ENCODE measurements at regions of chr14 and their contacts with region 1.

Region 1: DNA sequence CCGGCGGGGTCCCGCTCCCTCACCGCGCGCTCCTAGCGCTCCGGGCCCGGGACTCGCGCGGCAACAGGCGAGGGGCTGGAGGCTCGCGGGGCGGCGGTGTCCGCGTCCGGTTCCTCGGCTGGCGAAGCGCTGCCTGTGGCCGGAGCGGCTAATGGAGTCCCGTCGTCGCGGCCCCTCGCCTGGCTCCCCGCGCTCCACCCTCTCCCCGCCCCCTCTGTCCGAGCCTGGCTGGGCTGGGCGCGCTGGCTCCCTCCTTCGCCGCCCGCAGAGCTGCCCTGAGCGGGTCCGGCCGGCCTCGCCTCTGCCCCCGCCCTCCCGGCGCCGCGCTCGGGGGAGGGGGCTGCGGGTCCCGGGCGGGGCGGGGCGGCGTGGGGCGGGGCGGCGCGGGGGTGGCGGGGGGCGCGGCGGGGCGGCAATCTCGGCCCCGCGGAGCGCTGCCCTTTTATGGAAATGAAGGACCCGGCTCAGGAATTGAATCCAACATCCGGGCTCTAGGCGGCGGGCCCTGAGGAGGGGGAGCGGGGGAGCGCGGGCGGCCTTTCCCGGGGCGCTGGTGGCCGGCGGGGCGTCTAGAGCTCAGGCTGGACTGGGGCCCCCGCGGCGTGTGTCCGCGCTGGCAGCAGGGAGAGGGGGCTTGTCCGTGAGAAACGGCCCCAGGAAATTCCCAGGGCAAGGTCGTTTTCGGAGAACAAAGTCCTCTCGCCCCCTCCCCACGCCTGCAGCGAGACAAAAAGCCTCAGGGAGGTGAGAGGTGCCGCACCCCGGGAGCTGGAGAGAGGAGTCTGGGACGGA is at the start of gene FERMT2:
- DNase-seq: peak; percentile 92
- ATAC-seq: peak; percentile 85 to 97 (median 92)
- H3K4me3 ChIP-seq: peak within 1 kb of the TSS; percentile 76 to 98 (median 86)
- H3K27ac ChIP-seq: peak within 1 kb of the TSS; percentile 96 to 100 (median 99)
- H3K4me1 ChIP-seq: peaks cover 0 to 48% (median 44%) of the 10 kb centered on the region in 9 donors
- H3K27me3 ChIP-seq: peaks cover 0 to 68% (median 0%) of the 10 kb centered on the region in 7 donors
- CTCF ChIP-seq: peak in 1 of 9 donors; percentile 0
- total RNA-seq, gene FERMT2: 89.1 to 175 (median 115) TPM

Region 2: GRCh38 chr14:51677266-51677665 is 1273.8 kb before region 1 on chr14:
- intact Hi-C with region 1: no loop called
- DNase-seq: no peak
- ATAC-seq: peak in 2 of 8 donors; percentile 44 to 57
- H3K4me3 ChIP-seq: no peak overlapping the region
- H3K27ac ChIP-seq: peak overlapping the region in 4 of 10 donors; percentile 27 to 44 (median 36)
- H3K4me1 ChIP-seq: peaks cover 0 to 50% (median 20%) of the 10 kb centered on the region in 9 donors
- H3K27me3 ChIP-seq: no peaks in the 10 kb centered on the region
- CTCF ChIP-seq: no peak

Region 3: DNA sequence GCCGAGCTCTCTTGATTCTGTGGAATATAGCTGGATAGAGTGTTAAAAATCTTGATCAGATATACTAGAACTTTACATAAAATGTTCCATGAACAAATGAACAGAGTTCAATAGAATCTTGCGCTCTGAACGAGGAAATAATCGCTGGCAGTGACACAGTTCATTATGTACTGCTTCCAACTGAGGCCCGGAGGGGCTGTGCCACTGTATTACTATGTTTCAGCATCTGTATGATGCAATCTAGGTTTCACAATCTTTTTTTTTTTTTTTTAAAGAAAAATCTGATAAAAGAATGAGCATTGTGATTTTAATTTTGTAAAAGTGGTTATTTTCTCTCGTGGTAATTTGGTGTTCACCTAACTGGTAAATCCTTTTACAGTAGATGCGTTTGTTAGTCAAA is 77.4 kb before region 1 on chr14:
- intact Hi-C with region 1: loop called in 5 of 10 experiments (anchors 2 to 10 kb)
- DNase-seq: no peak
- ATAC-seq: peak in 1 of 8 donors; percentile 53
- H3K4me3 ChIP-seq: no peak overlapping the region
- H3K27ac ChIP-seq: peak overlapping the region in 1 of 10 donors; percentile 6
- H3K4me1 ChIP-seq: peaks cover 0 to 32% (median 20%) of the 10 kb centered on the region in 9 donors
- H3K27me3 ChIP-seq: no peaks in the 10 kb centered on the region
- CTCF ChIP-seq: no peak

Region 4: DNA sequence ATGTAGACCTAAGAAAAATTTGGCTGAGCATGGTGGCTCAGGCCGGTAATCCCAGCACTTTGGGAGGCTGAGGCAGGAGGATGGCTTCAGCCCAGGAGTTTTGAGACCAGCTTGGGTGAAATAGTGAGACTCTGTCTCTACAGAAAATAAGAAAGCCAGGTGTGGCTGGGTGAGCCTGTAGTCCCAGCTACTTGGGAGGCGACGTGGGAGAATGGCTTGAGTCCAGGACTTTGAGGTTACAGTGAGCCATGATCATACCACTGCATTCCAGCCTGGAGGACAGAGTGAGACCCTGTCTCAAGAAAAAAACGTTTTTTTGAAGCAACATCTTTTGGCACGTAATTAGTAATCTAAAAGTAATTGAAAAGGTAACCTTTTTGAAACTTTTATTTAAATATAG is 71.1 kb before region 1 on chr14:
- intact Hi-C with region 1: loop called in 6 of 10 experiments (anchors 2 to 10 kb)
- DNase-seq: no peak
- ATAC-seq: peak in 1 of 8 donors; percentile 55
- H3K4me3 ChIP-seq: no peak overlapping the region
- H3K27ac ChIP-seq: peak overlapping the region in 6 of 10 donors; percentile 1 to 59 (median 44)
- H3K4me1 ChIP-seq: peaks cover 0 to 61% (median 31%) of the 10 kb centered on the region in 9 donors
- H3K27me3 ChIP-seq: no peaks in the 10 kb centered on the region
- CTCF ChIP-seq: no peak

Region 5: DNA sequence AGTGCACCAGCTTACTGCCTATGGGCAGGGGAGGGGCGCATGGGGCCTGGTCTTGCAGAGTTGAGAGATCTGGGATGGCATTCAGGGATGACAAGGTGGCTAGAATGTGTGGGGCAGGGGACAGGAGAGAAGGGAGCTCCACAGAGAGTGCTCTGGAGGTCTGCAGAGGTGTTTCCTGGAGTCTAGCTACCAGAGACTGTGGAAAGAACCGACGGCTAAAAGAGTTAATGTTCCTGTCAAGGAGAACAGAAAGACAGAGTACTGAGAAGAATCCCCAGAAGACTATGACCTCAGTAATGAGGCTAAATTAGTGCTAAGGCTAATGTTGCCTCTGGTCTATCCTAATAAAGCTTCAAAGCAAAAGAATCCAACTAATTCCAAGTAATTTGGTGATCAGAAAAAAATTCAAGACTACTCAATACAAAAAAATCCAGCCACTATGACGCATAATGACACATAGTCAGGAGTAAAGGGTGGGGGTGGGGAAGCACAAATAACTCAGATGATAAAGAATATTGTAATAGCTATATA is 45.0 kb before region 1 on chr14:
- intact Hi-C with region 1: loop called in 1 of 10 experiments (anchors 5 kb)
- DNase-seq: no peak
- ATAC-seq: peak in 6 of 8 donors; percentile 16 to 57 (median 40)
- H3K4me3 ChIP-seq: no peak overlapping the region
- H3K27ac ChIP-seq: peak overlapping the region in 4 of 10 donors; percentile 3 to 53 (median 38)
- H3K4me1 ChIP-seq: peaks cover 11 to 87% (median 47%) of the 10 kb centered on the region in 9 donors
- H3K27me3 ChIP-seq: no peaks in the 10 kb centered on the region
- CTCF ChIP-seq: no peak

Region 6: DNA sequence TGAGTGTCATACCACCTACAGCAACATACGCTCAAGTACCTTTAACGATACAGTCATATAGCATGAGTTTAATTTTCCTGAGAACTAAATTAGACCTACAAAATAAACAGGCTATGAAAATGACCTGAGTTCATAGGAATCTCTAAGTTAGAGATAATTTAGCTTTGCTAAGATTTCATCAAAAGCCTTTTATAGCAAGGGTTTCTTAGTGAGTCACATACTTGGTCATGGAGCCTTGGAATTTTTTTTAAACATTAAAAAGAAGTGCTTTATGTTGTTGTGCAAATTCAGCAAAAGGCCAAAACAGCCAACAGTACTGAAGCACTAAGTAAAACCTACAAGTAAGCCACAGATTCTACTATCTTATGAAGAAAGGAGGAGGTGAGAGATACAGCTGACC is 93.4 kb after region 1 on chr14:
- intact Hi-C with region 1: loop called in 3 of 10 experiments (anchors 5 to 10 kb)
- DNase-seq: no peak
- ATAC-seq: no peak
- H3K4me3 ChIP-seq: no peak overlapping the region
- H3K27ac ChIP-seq: peak overlapping the region in 1 of 10 donors; percentile 41
- H3K4me1 ChIP-seq: peaks cover 0 to 43% (median 31%) of the 10 kb centered on the region in 9 donors
- H3K27me3 ChIP-seq: no peaks in the 10 kb centered on the region
- CTCF ChIP-seq: no peak

Region 7: GRCh38 chr14:53306267-53306721 is 355.2 kb after region 1 on chr14:
- intact Hi-C with region 1: loop called in 1 of 10 experiments (anchors 10 kb)
- DNase-seq: peak; percentile 44 to 67
- ATAC-seq: peak in 7 of 8 donors; percentile 70 to 87 (median 85)
- H3K4me3 ChIP-seq: peak overlapping the region in 9 of 10 donors; percentile 25 to 56 (median 42)
- H3K27ac ChIP-seq: peak overlapping the region in 8 of 10 donors; percentile 35 to 64 (median 40)
- H3K4me1 ChIP-seq: peaks cover 0 to 25% (median 5%) of the 10 kb centered on the region in 9 donors
- H3K27me3 ChIP-seq: no peaks in the 10 kb centered on the region
- CTCF ChIP-seq: peak; percentile 51 to 90 (median 82)

Measured in heart right ventricle (tissue), 16 donors.